Cardiac septum (tissue), 1 donor: ENCODE measurements at regions of chr5 and their contacts with region 1.

Region 1: GRCh38 chr5:158639881-158640592 is 459.7 kb downstream of the EBF1 start:
- DNase-seq: no peak

Region 2: GRCh38 chr5:157624144-157624543 is 1015.9 kb before region 1 on chr5:
- intact Hi-C with region 1: no loop called
- DNase-seq: no peak

Region 3: GRCh38 chr5:158686214-158686613 is 46.2 kb after region 1 on chr5:
- intact Hi-C with region 1: loop called (anchors 2 kb)
- DNase-seq: no peak